CD8-positive, alpha-beta memory T cell (primary cell): ENCODE measurements at regions of chr3 and their contacts with region 1.

Region 1: DNA sequence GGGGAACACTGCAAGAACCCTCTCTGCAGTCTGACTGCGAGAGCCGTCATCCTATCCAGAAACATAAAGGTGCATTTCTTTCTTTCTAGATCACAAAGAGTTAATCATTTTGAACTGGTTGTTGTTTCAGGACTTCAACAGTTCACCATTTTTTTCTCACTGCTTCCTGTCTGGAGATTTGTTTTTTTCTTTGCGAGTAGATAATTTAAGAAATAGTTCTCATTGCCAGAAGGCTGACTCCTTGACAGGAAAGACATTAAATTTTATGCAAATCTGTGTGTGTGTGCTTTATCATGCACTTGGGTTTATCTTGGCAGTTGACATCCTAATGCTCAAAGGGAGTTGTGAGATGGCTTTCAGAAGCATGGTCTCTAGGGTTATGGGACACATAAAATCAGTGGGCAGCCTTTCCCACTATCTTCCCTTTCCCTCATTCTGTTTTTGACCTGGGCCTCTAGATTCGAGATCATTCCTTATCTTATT is 123.5 kb upstream of the TBL1XR1 start:
- DNase-seq: peak in 1 of 5 donors; percentile 30
- H3K4me3 ChIP-seq: no peak overlapping the region
- H3K4me3 Mint-ChIP-seq: no peak overlapping the region
- H3K27ac ChIP-seq: no peak overlapping the region
- H3K27ac Mint-ChIP-seq: no peak overlapping the region
- H3K4me1 ChIP-seq: peaks cover 14% of the 10 kb centered on the region
- H3K4me1 Mint-ChIP-seq: peaks cover 23 to 29% (median 29%) of the 10 kb centered on the region in 3 donors
- H3K27me3 ChIP-seq: no peaks in the 10 kb centered on the region
- H3K27me3 Mint-ChIP-seq: no peaks in the 10 kb centered on the region

Region 2: GRCh38 chr3:177468331-177468730 is 147.5 kb after region 1 on chr3:
- CTCF ChIA-PET with region 1: no interaction called
- POLR2A ChIA-PET with region 1: no interaction called
- DNase-seq: no peak
- H3K4me3 ChIP-seq: no peak overlapping the region
- H3K4me3 Mint-ChIP-seq: no peak overlapping the region
- H3K27ac ChIP-seq: no peak overlapping the region
- H3K27ac Mint-ChIP-seq: peak overlapping the region in 1 of 8 donors; percentile 31
- H3K4me1 ChIP-seq: no peaks in the 10 kb centered on the region
- H3K4me1 Mint-ChIP-seq: peaks cover 2 to 14% (median 5%) of the 10 kb centered on the region in 3 donors
- H3K27me3 ChIP-seq: no peaks in the 10 kb centered on the region
- H3K27me3 Mint-ChIP-seq: peaks cover 0 to 1% of the 10 kb centered on the region in 2 donors

Region 3: GRCh38 chr3:177491296-177492032 is 170.7 kb after region 1 on chr3:
- CTCF ChIA-PET with region 1: no interaction called
- POLR2A ChIA-PET with region 1: no interaction called
- DNase-seq: no peak
- H3K4me3 ChIP-seq: no peak overlapping the region
- H3K4me3 Mint-ChIP-seq: peak overlapping the region in 1 of 7 donors; percentile 9
- H3K27ac ChIP-seq: no peak overlapping the region
- H3K27ac Mint-ChIP-seq: no peak overlapping the region
- H3K4me1 ChIP-seq: peaks cover 8% of the 10 kb centered on the region
- H3K4me1 Mint-ChIP-seq: peaks cover 5 to 14% (median 10%) of the 10 kb centered on the region in 3 donors
- H3K27me3 ChIP-seq: no peaks in the 10 kb centered on the region
- H3K27me3 Mint-ChIP-seq: peaks cover 0 to 1% of the 10 kb centered on the region in 2 donors

Region 4: GRCh38 chr3:177574251-177574743 is 253.5 kb after region 1 on chr3:
- CTCF ChIA-PET with region 1: no interaction called
- POLR2A ChIA-PET with region 1: interaction called, 11 read pairs
- DNase-seq: no peak
- H3K4me3 ChIP-seq: no peak overlapping the region
- H3K4me3 Mint-ChIP-seq: no peak overlapping the region
- H3K27ac ChIP-seq: no peak overlapping the region
- H3K27ac Mint-ChIP-seq: no peak overlapping the region
- H3K4me1 ChIP-seq: no peaks in the 10 kb centered on the region
- H3K4me1 Mint-ChIP-seq: peaks cover 0 to 8% (median 1%) of the 10 kb centered on the region in 3 donors
- H3K27me3 ChIP-seq: no peaks in the 10 kb centered on the region
- H3K27me3 Mint-ChIP-seq: peaks cover 0 to 2% of the 10 kb centered on the region in 2 donors